MCF 10A (cell line): ENCODE measurements at regions of chr12 and their contacts with region 1.

Region 1: GRCh38 chr12:68617160-68617926 is 6.6 kb downstream of the RAP1B start:
- DNase-seq: peak; percentile 54
- H3K4me3 Mint-ChIP-seq: no peak overlapping the region
- H3K27ac Mint-ChIP-seq: no peak overlapping the region
- H3K4me1 Mint-ChIP-seq: peaks cover 46% of the 10 kb centered on the region
- H3K27me3 Mint-ChIP-seq: no peaks in the 10 kb centered on the region
- CTCF ChIP-seq: no peak

Region 2: GRCh38 chr12:68342966-68343365 is 274.4 kb before region 1 on chr12:
- CTCF ChIA-PET with region 1: no interaction called
- POLR2A ChIA-PET with region 1: no interaction called
- intact Hi-C with region 1: no loop called
- DNase-seq: no peak
- H3K4me3 Mint-ChIP-seq: no peak overlapping the region
- H3K27ac Mint-ChIP-seq: no peak overlapping the region
- H3K4me1 Mint-ChIP-seq: peaks cover 6% of the 10 kb centered on the region
- H3K27me3 Mint-ChIP-seq: peaks cover 33% of the 10 kb centered on the region
- CTCF ChIP-seq: no peak

Region 3: GRCh38 chr12:68630050-68630449 is 12.7 kb after region 1 on chr12:
- CTCF ChIA-PET with region 1: interaction called, 4 read pairs
- POLR2A ChIA-PET with region 1: interaction called, 37 read pairs
- intact Hi-C with region 1: no loop called
- DNase-seq: no peak
- H3K4me3 Mint-ChIP-seq: no peak overlapping the region
- H3K27ac Mint-ChIP-seq: peak overlapping the region; percentile 31
- H3K4me1 Mint-ChIP-seq: peaks cover 17% of the 10 kb centered on the region
- H3K27me3 Mint-ChIP-seq: no peaks in the 10 kb centered on the region
- CTCF ChIP-seq: no peak

Region 4: DNA sequence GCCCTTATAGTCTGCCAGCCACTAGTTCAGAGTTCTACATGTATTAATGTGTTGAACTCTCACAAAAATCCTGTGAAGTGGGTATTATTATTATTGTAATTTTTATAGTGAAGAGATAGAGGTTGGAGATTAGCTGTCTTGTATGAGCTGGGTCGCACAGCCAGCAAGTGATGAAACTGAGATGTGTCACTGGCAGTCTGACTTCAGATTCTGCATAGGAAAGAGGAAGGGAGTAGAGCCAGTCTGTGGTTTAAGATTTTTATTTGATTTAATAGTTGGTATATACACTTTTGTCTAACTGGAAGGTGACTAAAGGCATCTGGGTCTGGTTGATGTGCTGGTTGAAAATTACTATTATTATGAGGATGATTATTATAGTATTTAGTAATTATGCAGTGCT is 847.1 kb after region 1 on chr12:
- CTCF ChIA-PET with region 1: no interaction called
- POLR2A ChIA-PET with region 1: no interaction called
- intact Hi-C with region 1: no loop called
- DNase-seq: no peak
- H3K4me3 Mint-ChIP-seq: no peak overlapping the region
- H3K27ac Mint-ChIP-seq: no peak overlapping the region
- H3K4me1 Mint-ChIP-seq: peaks cover 23% of the 10 kb centered on the region
- H3K27me3 Mint-ChIP-seq: no peaks in the 10 kb centered on the region
- CTCF ChIP-seq: no peak